Esophagus muscularis mucosa (tissue), 4 donors: ENCODE measurements at regions of chr5 and their contacts with region 1.

Region 1: DNA sequence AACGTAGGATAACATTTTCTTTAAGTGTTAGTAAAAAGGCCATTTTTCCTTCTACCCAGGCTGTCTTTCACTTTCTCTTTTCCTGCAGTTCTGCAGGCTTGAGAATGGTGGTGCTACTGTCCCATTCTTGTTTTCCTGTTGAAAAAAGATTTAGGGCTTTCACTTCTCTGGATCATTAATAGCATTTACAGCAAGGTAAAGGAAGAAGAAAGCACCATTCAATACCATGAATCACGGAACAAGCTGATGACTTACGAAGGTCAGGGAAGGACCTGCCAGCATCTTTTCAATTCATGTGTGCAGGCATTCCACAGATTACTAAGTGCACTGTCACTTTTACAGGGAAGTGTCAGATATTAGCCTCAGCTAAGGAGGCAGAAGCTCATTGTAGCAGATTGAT is 292.8 kb downstream of the YTHDC2 start:
- DNase-seq: no peak
- H3K4me3 ChIP-seq: peak overlapping the region; percentile 11 to 32 (median 27)
- H3K27ac ChIP-seq: peak overlapping the region; percentile 77 to 81 (median 78)
- H3K4me1 ChIP-seq: peaks cover 15 to 42% (median 37%) of the 10 kb centered on the region in 4 donors
- H3K27me3 ChIP-seq: no peaks in the 10 kb centered on the region
- CTCF ChIP-seq: peak; percentile 45 to 67 (median 54)
- EP300 ChIP-seq: no peak
- POLR2A ChIP-seq: no peak

Region 2: DNA sequence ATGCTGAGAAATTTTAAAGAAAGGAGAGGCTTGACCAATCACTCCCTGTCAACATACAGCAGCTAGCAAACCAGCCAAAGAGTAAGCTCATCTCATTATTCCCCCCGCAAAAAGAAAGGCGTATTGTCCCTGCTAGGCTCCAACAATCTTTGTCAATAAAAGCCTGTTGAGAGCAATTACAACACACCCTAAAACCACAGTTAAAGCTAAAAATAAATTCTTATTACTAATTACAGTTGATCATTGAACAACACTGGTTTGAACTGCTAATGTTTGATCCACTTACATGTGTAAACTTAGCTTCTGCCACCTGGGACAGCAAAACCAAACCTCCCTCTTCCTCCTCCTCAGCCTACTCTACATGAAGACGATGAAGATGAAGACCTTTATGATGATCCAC is 522.7 kb before region 1 on chr5:
- intact Hi-C with region 1: no loop called
- DNase-seq: no peak
- H3K4me3 ChIP-seq: no peak overlapping the region
- H3K27ac ChIP-seq: no peak overlapping the region
- H3K4me1 ChIP-seq: peaks cover 24 to 41% (median 26%) of the 10 kb centered on the region in 4 donors
- H3K27me3 ChIP-seq: no peaks in the 10 kb centered on the region
- CTCF ChIP-seq: no peak
- EP300 ChIP-seq: no peak
- POLR2A ChIP-seq: no peak

Region 3: DNA sequence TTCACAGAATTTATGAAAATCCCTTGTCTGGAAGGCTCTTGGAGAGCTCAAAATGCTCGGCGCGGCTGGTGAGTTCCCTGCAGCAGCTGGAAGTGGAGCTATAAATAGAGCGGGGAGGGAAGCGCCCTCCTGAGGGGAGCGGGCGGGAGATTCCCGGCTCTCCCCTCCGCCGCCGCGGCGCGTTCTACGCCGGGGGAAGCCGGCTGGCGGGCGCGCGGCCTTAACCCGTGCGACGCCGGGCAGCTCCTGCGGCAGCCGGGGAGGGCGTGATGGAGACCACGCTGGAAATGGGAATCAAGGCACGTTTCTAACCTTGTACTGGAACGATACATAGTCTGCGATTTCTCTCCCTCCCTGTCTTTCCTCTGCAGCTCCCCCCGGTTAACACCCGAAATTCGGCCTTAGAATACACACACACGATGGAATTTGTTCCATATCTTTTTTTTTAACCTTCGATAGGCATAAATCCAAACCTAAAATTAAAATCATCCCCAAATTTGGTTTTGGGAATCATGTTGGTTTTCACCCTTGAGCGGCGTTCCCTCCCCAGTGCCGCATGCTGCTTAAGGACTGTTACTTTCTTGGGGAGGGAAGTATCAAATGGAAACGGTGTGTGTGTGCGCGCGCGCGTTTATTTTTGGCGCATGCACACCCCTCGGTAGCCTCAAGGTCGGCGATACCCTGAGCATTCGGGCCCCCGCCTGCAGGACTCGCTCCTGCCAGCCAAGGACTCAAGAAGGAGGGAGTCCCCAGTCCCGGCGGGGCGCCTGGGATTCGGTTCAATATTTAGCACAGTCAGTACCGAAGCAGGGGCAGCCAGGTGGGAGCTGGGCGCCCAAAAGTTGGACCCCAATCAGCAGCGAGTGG is 249.3 kb after region 1 on chr5:
- intact Hi-C with region 1: loop called (anchors 10 kb)
- DNase-seq: no peak
- H3K4me3 ChIP-seq: peak overlapping the region; percentile 56 to 67 (median 64)
- H3K27ac ChIP-seq: peak overlapping the region; percentile 56 to 79 (median 68)
- H3K4me1 ChIP-seq: peaks cover 16 to 47% (median 36%) of the 10 kb centered on the region in 4 donors
- H3K27me3 ChIP-seq: peaks cover 0 to 14% (median 0%) of the 10 kb centered on the region in 4 donors
- CTCF ChIP-seq: peak in 1 of 3 experiments; percentile 11
- EP300 ChIP-seq: no peak
- POLR2A ChIP-seq: no peak